ENCODE measurements at regions of chr6 and their contacts with region 1.

Region 1: DNA sequence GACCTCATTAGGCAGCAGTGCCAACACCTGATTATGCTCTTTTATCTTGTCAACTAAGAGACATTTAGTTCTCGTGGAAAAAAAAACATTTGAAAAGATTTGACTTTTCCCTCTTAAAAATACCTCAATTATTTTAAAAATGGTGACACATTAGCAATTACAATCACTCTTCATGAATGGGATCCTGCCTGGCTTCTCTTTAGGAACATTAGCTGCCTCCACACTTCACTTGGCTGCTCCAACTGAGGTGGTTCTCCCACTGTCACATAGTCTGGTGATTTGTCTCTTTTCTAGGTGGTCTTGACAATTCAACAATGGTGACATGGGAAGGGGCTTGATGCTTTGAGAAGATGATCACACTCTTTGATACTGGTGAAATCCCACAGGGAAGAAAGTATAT is 26.2 kb upstream of the SLC35F1 start:
- DNase-seq: no peak
- H3K4me3 ChIP-seq: no peak overlapping the region
- H3K27ac ChIP-seq: no peak overlapping the region
- H3K4me1 ChIP-seq: no peaks in the 10 kb centered on the region
- H3K27me3 ChIP-seq: no peaks in the 10 kb centered on the region
- CTCF ChIP-seq: no peak

Region 2: DNA sequence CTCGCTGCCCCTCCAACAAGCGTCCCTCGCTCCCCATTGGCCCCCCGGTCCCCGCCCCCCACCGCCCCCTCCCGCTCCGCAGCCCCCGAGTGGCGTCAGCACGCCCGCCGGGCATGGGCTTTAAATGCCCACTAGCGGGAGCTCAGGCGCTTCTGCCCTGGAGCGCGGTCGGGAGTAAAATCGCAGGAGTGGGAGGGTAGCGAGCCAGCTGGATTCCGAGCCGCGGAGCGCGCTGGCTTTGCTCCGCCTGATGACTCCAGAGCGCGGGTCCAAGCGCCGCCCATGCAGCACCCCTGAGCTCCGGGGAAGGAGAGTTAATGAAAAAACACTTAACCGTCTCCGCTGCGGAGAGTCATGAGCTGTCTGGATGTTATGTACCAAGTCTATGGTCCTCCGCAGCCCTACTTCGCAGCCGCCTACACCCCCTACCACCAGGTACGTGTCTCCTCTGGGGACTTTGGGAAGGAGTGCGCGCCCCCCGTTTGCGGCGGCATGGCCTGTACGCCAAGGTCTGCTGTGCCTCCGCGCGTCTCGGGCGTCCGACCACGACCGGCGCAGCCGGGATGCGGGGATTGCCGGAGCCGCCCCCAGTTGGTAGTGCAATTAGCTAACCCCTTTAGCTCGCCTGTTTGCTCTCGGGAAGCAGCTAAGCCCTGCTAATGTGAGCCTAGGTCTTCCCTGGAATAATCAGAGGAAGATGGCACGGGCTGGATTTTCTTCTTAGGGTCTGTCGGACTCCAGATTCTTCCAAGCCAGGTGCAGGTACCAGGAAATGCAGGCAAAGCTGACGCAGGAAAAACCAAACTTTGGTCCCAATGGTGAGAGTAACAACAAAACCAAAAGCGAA is 615.2 kb before region 1 on chr6 and contains the start of gene VGLL2:
- CTCF ChIA-PET with region 1: interaction called, 19 read pairs
- dilution Hi-C with region 1: no loop called
- in situ Hi-C with region 1: no loop called
- intact Hi-C with region 1: no loop called
- DNase-seq: peak; percentile 20
- H3K4me3 ChIP-seq: peak within 1 kb of the TSS; percentile 20 to 32 (median 25)
- H3K27ac ChIP-seq: no peak within 1 kb of the TSS
- H3K4me1 ChIP-seq: peaks cover 18% of the 10 kb centered on the region
- H3K27me3 ChIP-seq: peaks cover 90% of the 10 kb centered on the region
- CTCF ChIP-seq: no peak
- total RNA-seq, gene VGLL2: not detected

Region 3: GRCh38 chr6:117906853-117907599 is 26.2 kb after region 1 on chr6 and contains the start of gene SLC35F1:
- CTCF ChIA-PET with region 1: no interaction called
- dilution Hi-C with region 1: no loop called
- in situ Hi-C with region 1: no loop called
- intact Hi-C with region 1: no loop called
- DNase-seq: peak; percentile 25
- H3K4me3 ChIP-seq: peak within 1 kb of the TSS in 1 of 3 experiments; percentile 30
- H3K27ac ChIP-seq: no peak within 1 kb of the TSS
- H3K4me1 ChIP-seq: no peaks in the 10 kb centered on the region
- H3K27me3 ChIP-seq: peaks cover 21% of the 10 kb centered on the region
- CTCF ChIP-seq: peak in 1 of 2 donors; percentile 24
- total RNA-seq, gene SLC35F1: not detected

Measured in mammary epithelial cell (primary cell).